Posterior cingulate gyrus (tissue), 11 donors: ENCODE measurements at regions of chr5 and their contacts with region 1.

Region 1: GRCh38 chr5:177592010-177592834 is at the start of gene TMED9:
- DNase-seq: peak; percentile 74 to 98 (median 85)

Region 2: GRCh38 chr5:177554474-177555111 is 37.6 kb before region 1 on chr5 and contains the start of gene FAM193B:
- intact Hi-C with region 1: loop called (anchors 2 kb)
- DNase-seq: peak; percentile 90 to 99 (median 95)

Region 3: DNA sequence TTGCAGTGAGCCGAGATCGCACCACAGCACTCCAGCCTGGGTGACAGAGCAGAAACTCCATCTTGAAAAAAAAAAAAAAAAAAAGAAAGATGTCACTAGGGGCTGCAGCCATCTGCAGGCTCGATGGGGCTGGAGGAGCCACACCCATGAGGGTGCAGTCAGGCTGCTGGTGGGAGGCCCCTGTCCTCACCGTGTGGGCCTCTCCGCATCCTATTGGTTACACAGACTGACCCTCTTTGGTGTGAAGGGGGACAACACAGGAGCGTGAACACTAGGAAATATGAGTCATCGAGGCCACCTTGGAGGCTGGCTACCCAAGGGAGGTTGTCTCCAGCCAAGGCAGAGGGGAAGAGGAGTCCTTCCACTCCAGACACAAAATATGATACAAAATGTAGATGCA is 23.9 kb before region 1 on chr5:
- intact Hi-C with region 1: loop called (anchors 2 kb)
- DNase-seq: peak in 1 of 10 donors; percentile 3